HCT116 (cell line): ENCODE measurements at regions of chr2 and their contacts with region 1.

Region 1: DNA sequence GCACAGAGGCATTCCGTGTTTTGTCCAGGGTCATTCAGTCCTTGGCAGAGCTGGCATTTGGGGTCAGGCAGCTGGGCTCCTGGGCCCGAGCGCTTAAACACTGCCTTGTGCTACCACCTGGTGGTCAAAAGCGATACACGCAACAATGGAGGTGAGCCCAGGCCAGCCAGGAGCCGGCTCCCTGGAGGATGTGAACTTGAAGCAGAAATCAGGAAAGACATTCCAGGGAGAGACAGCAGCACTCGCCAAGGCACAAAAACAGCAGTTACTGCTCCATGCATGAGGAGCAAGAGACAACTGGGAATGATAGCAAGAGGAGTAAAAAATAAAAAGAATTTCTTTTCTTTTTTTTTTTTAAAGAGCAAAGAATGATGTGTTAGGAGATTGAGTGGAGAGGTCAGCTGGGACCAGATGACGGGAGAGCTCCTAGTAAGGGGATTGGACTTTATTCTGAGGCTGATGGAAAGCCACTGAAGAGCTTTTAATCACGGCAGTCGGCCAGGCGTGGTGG is 20.7 kb downstream of the SCYGR8 start:
- DNase-seq: peak; percentile 63
- ATAC-seq: peak; percentile 99
- H3K4me3 ChIP-seq: no peak overlapping the region
- H3K27ac ChIP-seq: no peak overlapping the region
- H3K4me1 ChIP-seq: peaks cover 0 to 6% of the 10 kb centered on the region in 2 experiments; a peak in 1 of 4 replicates
- H3K27me3 ChIP-seq: no peaks in the 10 kb centered on the region
- CTCF ChIP-seq: peak; percentile 78 to 93 (median 90); a peak in 5 of 6 replicates
- POLR2A ChIP-seq: no peak
- RAD21 ChIP-seq: peak; percentile 98

Region 2: GRCh38 chr2:226079671-226080181 is 1686.7 kb before region 1 on chr2:
- CTCF ChIA-PET with region 1: no interaction called
- POLR2A ChIA-PET with region 1: no interaction called
- RAD21 ChIA-PET with region 1: no interaction called
- intact Hi-C with region 1: no loop called
- DNase-seq: peak; percentile 52
- ATAC-seq: no peak
- H3K4me3 ChIP-seq: no peak overlapping the region
- H3K27ac ChIP-seq: peak overlapping the region; percentile 59; the same call in 1 of the 2 replicates
- H3K4me1 ChIP-seq: peaks cover 13 to 46% of the 10 kb centered on the region in 2 experiments
- H3K27me3 ChIP-seq: no peaks in the 10 kb centered on the region
- CTCF ChIP-seq: no peak
- POLR2A ChIP-seq: no peak
- RAD21 ChIP-seq: peak; percentile 26; the same call in 1 of the 2 replicates

Region 3: DNA sequence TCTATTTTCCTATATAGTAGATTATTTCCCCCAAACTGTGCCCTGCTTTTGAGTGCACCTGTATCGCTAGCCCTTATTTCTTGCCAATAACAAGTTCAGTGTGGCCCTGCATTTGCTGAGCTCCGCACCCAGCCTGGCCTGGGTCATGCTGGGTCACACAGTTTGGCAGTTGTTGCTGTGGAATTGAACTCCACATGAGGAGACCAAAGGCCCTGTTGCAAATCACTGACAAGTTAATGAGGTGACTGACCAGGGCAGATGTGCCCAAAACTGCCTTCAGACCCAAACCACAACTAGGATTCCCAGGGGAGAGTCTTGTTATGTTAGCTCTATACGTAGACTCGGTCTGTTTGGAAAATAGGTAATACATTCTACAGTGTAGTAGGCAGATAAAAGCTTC is 633.4 kb before region 1 on chr2:
- CTCF ChIA-PET with region 1: interaction called, 11 read pairs
- POLR2A ChIA-PET with region 1: no interaction called
- RAD21 ChIA-PET with region 1: no interaction called
- intact Hi-C with region 1: loop called (anchors 1 kb)
- DNase-seq: no peak
- ATAC-seq: no peak
- H3K4me3 ChIP-seq: no peak overlapping the region
- H3K27ac ChIP-seq: no peak overlapping the region
- H3K4me1 ChIP-seq: no peaks in the 10 kb centered on the region
- H3K27me3 ChIP-seq: no peaks in the 10 kb centered on the region
- CTCF ChIP-seq: no peak
- POLR2A ChIP-seq: no peak
- RAD21 ChIP-seq: no peak

Region 4: GRCh38 chr2:227238238-227239237 is 527.9 kb before region 1 on chr2:
- CTCF ChIA-PET with region 1: interaction called, 22 read pairs
- POLR2A ChIA-PET with region 1: no interaction called
- RAD21 ChIA-PET with region 1: interaction called in 1 of 2 experiments, 4 read pairs
- intact Hi-C with region 1: loop called (anchors 10 kb)
- DNase-seq: peak; percentile 41
- ATAC-seq: peak; percentile 79
- H3K4me3 ChIP-seq: no peak overlapping the region
- H3K27ac ChIP-seq: no peak overlapping the region
- H3K4me1 ChIP-seq: no peaks in the 10 kb centered on the region
- H3K27me3 ChIP-seq: no peaks in the 10 kb centered on the region
- CTCF ChIP-seq: peak; percentile 85 to 98 (median 94)
- POLR2A ChIP-seq: no peak
- RAD21 ChIP-seq: peak; percentile 92

Region 5: GRCh38 chr2:227248876-227249275 is 517.6 kb before region 1 on chr2:
- CTCF ChIA-PET with region 1: no interaction called
- POLR2A ChIA-PET with region 1: no interaction called
- RAD21 ChIA-PET with region 1: no interaction called
- intact Hi-C with region 1: loop called (anchors 10 kb)
- DNase-seq: no peak
- ATAC-seq: no peak
- H3K4me3 ChIP-seq: no peak overlapping the region
- H3K27ac ChIP-seq: no peak overlapping the region
- H3K4me1 ChIP-seq: no peaks in the 10 kb centered on the region
- H3K27me3 ChIP-seq: no peaks in the 10 kb centered on the region
- CTCF ChIP-seq: no peak
- POLR2A ChIP-seq: no peak
- RAD21 ChIP-seq: no peak

Region 6: GRCh38 chr2:227406177-227407031 is 360.0 kb before region 1 on chr2:
- CTCF ChIA-PET with region 1: interaction called, 33 read pairs
- POLR2A ChIA-PET with region 1: no interaction called
- RAD21 ChIA-PET with region 1: interaction called in 1 of 2 experiments, 7 read pairs
- intact Hi-C with region 1: loop called (anchors 1 kb)
- DNase-seq: peak; percentile 94
- ATAC-seq: peak; percentile 92
- H3K4me3 ChIP-seq: 0 out of 4 replicates have a peak overlapping the region, but pooled peaks of 1 of the 2 experiments have one; percentile 4
- H3K27ac ChIP-seq: peak overlapping the region; percentile 11; the same call in 1 of the 2 replicates
- H3K4me1 ChIP-seq: peaks cover 6 to 27% of the 10 kb centered on the region in 2 experiments
- H3K27me3 ChIP-seq: no peaks in the 10 kb centered on the region
- CTCF ChIP-seq: peak; percentile 71 to 92 (median 84)
- POLR2A ChIP-seq: no peak
- RAD21 ChIP-seq: peak; percentile 99

Region 7: GRCh38 chr2:227479865-227480475 is 286.5 kb before region 1 on chr2:
- CTCF ChIA-PET with region 1: interaction called, 13 read pairs
- POLR2A ChIA-PET with region 1: no interaction called
- RAD21 ChIA-PET with region 1: no interaction called
- intact Hi-C with region 1: loop called (anchors 2 kb)
- DNase-seq: no peak
- ATAC-seq: peak; percentile 72
- H3K4me3 ChIP-seq: no peak overlapping the region
- H3K27ac ChIP-seq: no peak overlapping the region
- H3K4me1 ChIP-seq: peaks cover 0 to 3% of the 10 kb centered on the region in 2 experiments; a peak in 2 of 4 replicates
- H3K27me3 ChIP-seq: no peaks in the 10 kb centered on the region
- CTCF ChIP-seq: peak; percentile 19 to 65 (median 37); a peak in 4 of 6 replicates
- POLR2A ChIP-seq: no peak
- RAD21 ChIP-seq: peak; percentile 73

Region 8: DNA sequence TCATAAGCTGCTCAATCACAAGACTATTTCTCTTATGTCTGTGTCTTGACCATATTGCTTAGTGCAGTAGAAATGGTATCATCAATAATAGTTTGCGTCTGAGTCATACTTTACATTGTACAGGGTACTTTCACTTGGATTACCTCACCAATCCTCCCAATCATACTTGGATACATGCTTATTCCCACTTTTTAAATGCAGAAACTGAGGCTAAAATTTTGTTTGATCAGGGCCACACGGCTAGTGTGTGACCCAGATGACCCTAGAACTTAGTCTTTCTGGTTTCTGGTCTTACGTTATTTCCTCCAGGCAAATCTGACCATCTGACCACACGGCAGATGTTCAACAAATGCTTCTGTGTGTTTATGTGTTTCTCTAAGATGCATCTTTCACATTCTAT is 23.4 kb after region 1 on chr2:
- CTCF ChIA-PET with region 1: no interaction called
- POLR2A ChIA-PET with region 1: no interaction called
- RAD21 ChIA-PET with region 1: no interaction called
- intact Hi-C with region 1: no loop called
- DNase-seq: no peak
- ATAC-seq: no peak
- H3K4me3 ChIP-seq: no peak overlapping the region
- H3K27ac ChIP-seq: no peak overlapping the region
- H3K4me1 ChIP-seq: no peaks in the 10 kb centered on the region
- H3K27me3 ChIP-seq: no peaks in the 10 kb centered on the region
- CTCF ChIP-seq: no peak
- POLR2A ChIP-seq: no peak
- RAD21 ChIP-seq: no peak

Region 9: DNA sequence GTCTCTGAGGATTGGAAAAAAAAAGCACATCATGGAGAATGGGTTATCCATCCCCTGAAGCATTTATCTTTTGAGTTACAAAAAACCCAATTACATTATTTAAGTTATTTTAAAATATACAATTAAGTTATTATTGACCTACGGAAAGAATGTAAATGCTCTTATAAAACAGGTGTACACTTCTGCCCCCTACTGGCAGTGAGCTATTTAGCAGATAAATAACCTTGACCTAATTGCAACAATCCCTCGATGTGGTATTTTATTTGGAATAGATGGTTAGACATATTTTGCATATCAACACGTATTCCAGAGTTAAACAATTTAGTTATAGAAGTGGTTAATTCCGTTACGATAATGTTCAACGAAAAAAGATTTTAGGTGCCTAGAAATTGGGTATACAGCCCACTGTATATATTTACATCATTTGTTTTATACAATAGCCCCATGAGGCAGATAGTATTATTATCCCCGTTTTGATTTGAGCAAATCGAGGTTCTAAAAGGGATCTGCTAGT is 95.9 kb after region 1 on chr2:
- CTCF ChIA-PET with region 1: interaction called, 14 read pairs
- POLR2A ChIA-PET with region 1: no interaction called
- RAD21 ChIA-PET with region 1: interaction called in 1 of 2 experiments, 6 read pairs
- intact Hi-C with region 1: no loop called
- DNase-seq: peak; percentile 51
- ATAC-seq: no peak
- H3K4me3 ChIP-seq: peak overlapping the region in 1 of 2 experiments; percentile 42; a peak in 2 of 4 replicates
- H3K27ac ChIP-seq: peak overlapping the region; percentile 64
- H3K4me1 ChIP-seq: peaks cover 14 to 28% of the 10 kb centered on the region in 2 experiments
- H3K27me3 ChIP-seq: no peaks in the 10 kb centered on the region
- CTCF ChIP-seq: peak; percentile 68 to 84 (median 70); a peak in 5 of 6 replicates
- POLR2A ChIP-seq: no peak
- RAD21 ChIP-seq: peak; percentile 77

Region 10: DNA sequence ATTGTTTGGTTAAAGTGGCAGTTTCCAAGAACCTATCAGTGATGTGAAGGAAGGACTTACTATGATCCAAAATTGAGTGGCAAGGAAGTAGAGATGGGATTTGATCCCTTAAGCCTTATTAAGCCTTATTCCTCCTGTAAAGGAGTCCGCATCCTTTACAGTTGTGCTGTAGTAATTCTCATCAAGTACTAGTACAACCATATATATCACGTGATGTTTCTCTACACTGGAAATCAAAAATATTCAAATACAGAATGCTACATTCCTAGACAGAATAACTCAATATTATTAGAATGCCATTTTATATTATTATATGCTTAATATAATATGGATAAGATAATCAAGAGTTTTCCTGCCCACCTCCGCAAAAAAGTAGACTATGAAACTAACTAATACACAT is 727.4 kb after region 1 on chr2:
- CTCF ChIA-PET with region 1: no interaction called
- POLR2A ChIA-PET with region 1: no interaction called
- RAD21 ChIA-PET with region 1: no interaction called
- intact Hi-C with region 1: no loop called
- DNase-seq: no peak
- ATAC-seq: no peak
- H3K4me3 ChIP-seq: no peak overlapping the region
- H3K27ac ChIP-seq: no peak overlapping the region
- H3K4me1 ChIP-seq: no peaks in the 10 kb centered on the region
- H3K27me3 ChIP-seq: no peaks in the 10 kb centered on the region
- CTCF ChIP-seq: no peak
- POLR2A ChIP-seq: no peak
- RAD21 ChIP-seq: no peak